A549 (cell line): ENCODE measurements at regions of chr14 and their contacts with region 1.

Region 1: DNA sequence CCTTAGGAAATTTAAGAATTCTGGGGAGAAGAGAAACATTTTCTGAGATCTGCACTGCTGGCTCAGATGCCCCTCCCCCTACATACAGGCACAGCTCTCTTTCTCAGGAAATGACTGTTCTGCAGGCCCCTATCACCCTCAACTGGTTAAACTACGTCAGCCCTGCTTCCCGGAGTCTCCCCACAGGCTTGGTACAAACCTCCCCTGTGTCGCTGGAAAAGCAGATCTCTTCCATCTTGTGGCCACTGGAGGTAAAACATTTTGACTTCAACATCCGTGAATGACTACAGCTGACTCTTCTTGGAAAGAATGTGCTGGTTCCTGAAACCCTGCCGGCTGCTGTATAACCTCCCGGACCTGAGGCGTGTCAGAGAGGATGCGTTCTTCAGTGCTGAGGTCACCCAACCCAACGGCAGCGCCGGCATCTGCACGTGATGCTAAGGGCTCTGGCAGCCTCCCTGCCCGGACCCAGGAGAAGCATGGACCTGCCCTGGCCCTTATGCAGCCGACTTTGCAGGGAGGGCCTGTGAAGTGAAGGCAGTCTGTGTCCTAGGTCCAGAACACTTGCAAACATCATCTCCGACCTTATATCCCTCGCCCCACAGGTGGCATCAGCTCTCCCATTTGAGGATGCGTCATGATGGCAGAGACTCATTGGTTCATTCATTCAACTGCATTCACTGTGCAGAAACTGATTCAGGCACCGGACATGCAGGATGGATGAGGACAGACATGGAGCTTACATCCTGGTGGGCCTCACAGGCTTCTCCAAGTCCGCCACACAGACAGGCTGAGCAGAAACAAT is 129.3 kb downstream of the GCH1 start:
- DNase-seq: peak; percentile 97 to 99
- ATAC-seq: peak; percentile 93 to 94
- H3K4me3 ChIP-seq: peak overlapping the region; percentile 2; the same call in 1 of the 3 replicates
- H3K27ac ChIP-seq: peak overlapping the region; percentile 77 to 86
- H3K4me1 ChIP-seq: peaks cover 27% of the 10 kb centered on the region
- CTCF ChIP-seq: peak; percentile 63
- EP300 ChIP-seq: peak in 1 of 2 experiments; percentile 51; a peak in 1 of 5 replicates
- POLR2A ChIP-seq: no peak
- RAD21 ChIP-seq: peak; percentile 72 to 80

Region 2: GRCh38 chr14:54498095-54498531 is 275.3 kb before region 1 on chr14:
- CTCF ChIA-PET with region 1: interaction called, 12 read pairs
- POLR2A ChIA-PET with region 1: no interaction called
- DNase-seq: no peak
- ATAC-seq: no peak
- H3K4me3 ChIP-seq: no peak overlapping the region
- H3K27ac ChIP-seq: no peak overlapping the region
- H3K4me1 ChIP-seq: peaks cover 4% of the 10 kb centered on the region; the same call in 1 of the 3 replicates
- CTCF ChIP-seq: no peak
- EP300 ChIP-seq: 0 out of 5 replicates have a peak, but pooled peaks of 1 of the 2 experiments have one; percentile 8
- POLR2A ChIP-seq: no peak
- RAD21 ChIP-seq: no peak

Region 3: GRCh38 chr14:54555651-54556050 is 217.7 kb before region 1 on chr14:
- CTCF ChIA-PET with region 1: interaction called, 272 read pairs
- POLR2A ChIA-PET with region 1: no interaction called
- DNase-seq: peak; percentile 10 to 20
- ATAC-seq: peak; percentile 68 to 78; a peak in 4 of 6 replicates
- H3K4me3 ChIP-seq: no peak overlapping the region
- H3K27ac ChIP-seq: no peak overlapping the region
- H3K4me1 ChIP-seq: no peaks in the 10 kb centered on the region
- CTCF ChIP-seq: peak; percentile 22; the same call in 1 of the 3 replicates
- EP300 ChIP-seq: no peak
- POLR2A ChIP-seq: no peak
- RAD21 ChIP-seq: peak; percentile 29 to 44; a peak in 2 of 5 replicates

Region 4: GRCh38 chr14:54642801-54643697 is 130.3 kb before region 1 on chr14:
- CTCF ChIA-PET with region 1: interaction called, 12 read pairs
- POLR2A ChIA-PET with region 1: no interaction called
- DNase-seq: peak in 1 of 2 experiments; percentile 29
- ATAC-seq: peak in 1 of 2 experiments; percentile 66; a peak in 3 of 6 replicates
- H3K4me3 ChIP-seq: no peak overlapping the region
- H3K27ac ChIP-seq: 0 out of 6 replicates have a peak overlapping the region, but pooled peaks of 1 of the 2 experiments have one; percentile 2
- H3K4me1 ChIP-seq: peaks cover 10% of the 10 kb centered on the region
- CTCF ChIP-seq: peak; percentile 51
- EP300 ChIP-seq: no peak
- POLR2A ChIP-seq: no peak
- RAD21 ChIP-seq: peak; percentile 46 to 54

Region 5: DNA sequence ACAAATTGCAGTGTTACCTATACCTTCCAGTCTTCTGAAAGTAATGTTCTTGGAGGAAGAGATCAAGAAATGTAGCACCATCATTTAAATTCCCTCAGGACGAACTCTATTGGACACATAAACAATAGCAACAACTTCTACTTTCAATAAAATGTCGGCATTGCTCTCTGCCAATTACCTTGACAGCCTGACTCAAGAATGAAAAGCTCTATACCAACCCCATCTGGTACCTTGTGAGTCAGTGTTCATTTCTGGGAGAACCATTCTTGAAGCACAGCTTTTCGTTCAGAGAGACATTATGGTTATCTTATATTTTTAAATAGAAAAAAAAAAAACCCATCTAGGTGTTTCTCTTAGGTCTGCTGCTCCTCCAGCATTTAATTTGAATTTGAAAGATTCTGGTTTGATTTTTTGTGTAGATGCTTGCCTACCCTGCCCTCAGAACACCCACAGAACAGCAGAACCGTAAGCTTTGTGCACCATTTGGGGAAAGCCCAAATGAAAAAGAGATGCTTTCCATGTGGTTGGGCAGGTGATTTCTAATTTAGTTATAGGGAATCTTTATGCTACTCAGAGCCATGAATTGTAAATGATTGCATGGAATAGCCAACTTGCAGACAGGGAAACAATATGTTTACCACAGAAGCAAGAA is 50.5 kb before region 1 on chr14:
- CTCF ChIA-PET with region 1: interaction called, 75 read pairs
- POLR2A ChIA-PET with region 1: no interaction called
- DNase-seq: peak; percentile 31 to 59
- ATAC-seq: peak; percentile 73 to 88; a peak in 5 of 6 replicates
- H3K4me3 ChIP-seq: no peak overlapping the region
- H3K27ac ChIP-seq: no peak overlapping the region
- H3K4me1 ChIP-seq: no peaks in the 10 kb centered on the region
- CTCF ChIP-seq: peak; percentile 49
- EP300 ChIP-seq: no peak
- POLR2A ChIP-seq: no peak
- RAD21 ChIP-seq: peak; percentile 61 to 73

Region 6: DNA sequence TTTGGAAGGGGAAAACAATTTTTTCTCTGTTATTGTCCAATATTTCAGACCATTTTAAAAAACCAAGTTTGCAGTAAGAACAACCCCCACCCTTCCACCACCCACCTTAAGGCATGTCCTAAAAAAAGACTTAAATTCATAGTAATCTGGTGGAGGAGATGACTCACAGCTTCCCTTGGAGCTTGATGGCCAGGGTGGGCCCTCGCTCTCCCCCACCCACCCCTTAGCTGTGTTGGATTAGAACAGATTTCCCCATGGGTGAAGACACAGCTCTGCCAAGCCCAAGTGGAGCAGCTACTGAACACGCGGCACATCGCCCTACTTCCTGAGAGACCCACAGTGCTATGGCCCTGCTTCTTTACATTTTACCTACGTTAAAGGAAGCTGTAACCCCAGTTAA is 11.1 kb before region 1 on chr14:
- CTCF ChIA-PET with region 1: interaction called, 32 read pairs
- POLR2A ChIA-PET with region 1: interaction called, 3 read pairs
- DNase-seq: no peak
- ATAC-seq: no peak
- H3K4me3 ChIP-seq: no peak overlapping the region
- H3K27ac ChIP-seq: no peak overlapping the region
- H3K4me1 ChIP-seq: no peaks in the 10 kb centered on the region
- CTCF ChIP-seq: no peak
- EP300 ChIP-seq: no peak
- POLR2A ChIP-seq: no peak
- RAD21 ChIP-seq: no peak